Esophagus muscularis mucosa (tissue), 4 donors: ENCODE measurements at regions of chr1 and their contacts with region 1.

Region 1: GRCh38 chr1:234599617-234600417 is 10.2 kb downstream of the IRF2BP2 start:
- DNase-seq: peak; percentile 95
- H3K4me3 ChIP-seq: peak overlapping the region; percentile 55 to 64 (median 57)
- H3K27ac ChIP-seq: peak overlapping the region; percentile 92 to 100 (median 100)
- H3K4me1 ChIP-seq: peaks cover 49 to 61% (median 57%) of the 10 kb centered on the region in 4 donors
- H3K27me3 ChIP-seq: no peaks in the 10 kb centered on the region
- CTCF ChIP-seq: no peak
- EP300 ChIP-seq: peak; percentile 80
- POLR2A ChIP-seq: peak; percentile 54

Region 2: GRCh38 chr1:233972939-233973635 is 626.7 kb before region 1 on chr1:
- intact Hi-C with region 1: no loop called
- DNase-seq: no peak
- H3K4me3 ChIP-seq: no peak overlapping the region
- H3K27ac ChIP-seq: no peak overlapping the region
- H3K4me1 ChIP-seq: no peaks in the 10 kb centered on the region
- H3K27me3 ChIP-seq: no peaks in the 10 kb centered on the region
- CTCF ChIP-seq: no peak
- EP300 ChIP-seq: no peak
- POLR2A ChIP-seq: no peak

Region 3: GRCh38 chr1:234499119-234499942 is 100.5 kb before region 1 on chr1:
- intact Hi-C with region 1: loop called (anchors 5 kb)
- DNase-seq: peak; percentile 98
- H3K4me3 ChIP-seq: peak overlapping the region; percentile 28 to 46 (median 35)
- H3K27ac ChIP-seq: peak overlapping the region; percentile 85 to 90 (median 87)
- H3K4me1 ChIP-seq: peaks cover 15 to 55% (median 49%) of the 10 kb centered on the region in 4 donors
- H3K27me3 ChIP-seq: no peaks in the 10 kb centered on the region
- CTCF ChIP-seq: peak; percentile 94 to 98 (median 97)
- EP300 ChIP-seq: no peak
- POLR2A ChIP-seq: no peak

Region 4: DNA sequence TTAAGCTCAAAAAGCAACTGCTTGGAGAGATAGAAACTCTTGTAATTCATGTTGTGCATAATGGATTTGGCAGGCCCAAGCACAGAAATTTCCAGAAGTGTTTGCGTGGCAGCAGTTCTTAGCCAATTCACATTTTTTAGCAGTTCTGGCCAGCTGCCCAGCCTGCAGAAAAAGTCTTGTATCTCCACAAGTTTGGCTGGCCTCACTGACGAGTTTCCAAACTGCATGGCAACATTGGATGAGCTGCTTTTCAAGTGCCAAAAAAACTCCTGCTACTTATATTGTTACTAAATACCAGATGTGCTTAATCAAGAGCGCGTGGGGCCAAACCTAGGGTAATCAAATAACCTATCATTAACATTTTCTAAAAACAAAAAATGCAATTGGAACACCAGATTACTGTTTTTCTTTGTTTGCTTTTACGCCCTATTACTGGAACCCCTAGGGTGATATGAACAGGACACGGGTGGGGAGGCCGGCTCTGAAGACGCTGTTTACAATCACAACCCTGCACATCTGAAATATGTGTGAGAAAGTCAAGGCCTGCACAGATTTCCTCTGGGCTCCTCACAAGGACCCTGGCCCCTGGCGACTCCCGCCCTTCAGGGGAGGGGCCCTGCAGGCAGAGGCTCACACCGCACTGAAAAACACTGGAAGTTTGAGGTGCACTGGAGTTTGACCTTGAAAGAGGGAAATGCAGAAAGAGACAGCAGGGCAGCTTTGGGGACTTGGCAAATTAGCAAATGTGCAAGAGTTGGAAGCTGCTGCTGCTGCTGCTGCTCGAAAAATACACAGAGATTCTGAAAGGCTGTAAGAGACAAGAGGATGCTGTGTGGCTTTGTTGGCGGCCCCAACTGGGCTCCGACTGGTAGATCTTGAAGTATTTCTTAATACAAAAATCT is 65.6 kb before region 1 on chr1:
- intact Hi-C with region 1: loop called (anchors 2 kb)
- DNase-seq: peak; percentile 98
- H3K4me3 ChIP-seq: peak overlapping the region in 1 of 4 donors; percentile 0
- H3K27ac ChIP-seq: peak overlapping the region; percentile 92 to 99 (median 96)
- H3K4me1 ChIP-seq: peaks cover 98 to 100% (median 99%) of the 10 kb centered on the region in 4 donors
- H3K27me3 ChIP-seq: no peaks in the 10 kb centered on the region
- CTCF ChIP-seq: no peak
- EP300 ChIP-seq: no peak
- POLR2A ChIP-seq: no peak

Region 5: GRCh38 chr1:234645474-234645953 is 45.7 kb after region 1 on chr1:
- intact Hi-C with region 1: no loop called
- DNase-seq: no peak
- H3K4me3 ChIP-seq: no peak overlapping the region
- H3K27ac ChIP-seq: no peak overlapping the region
- H3K4me1 ChIP-seq: no peaks in the 10 kb centered on the region
- H3K27me3 ChIP-seq: no peaks in the 10 kb centered on the region
- CTCF ChIP-seq: no peak
- EP300 ChIP-seq: no peak
- POLR2A ChIP-seq: no peak

Region 6: GRCh38 chr1:235087896-235088295 is 488.1 kb after region 1 on chr1:
- intact Hi-C with region 1: loop called (anchors 5 kb)
- DNase-seq: no peak
- H3K4me3 ChIP-seq: no peak overlapping the region
- H3K27ac ChIP-seq: no peak overlapping the region
- H3K4me1 ChIP-seq: peaks cover 14 to 38% (median 33%) of the 10 kb centered on the region in 4 donors
- H3K27me3 ChIP-seq: no peaks in the 10 kb centered on the region
- CTCF ChIP-seq: no peak
- EP300 ChIP-seq: no peak
- POLR2A ChIP-seq: no peak